Posterior cingulate gyrus (tissue), 11 donors: ENCODE measurements at regions of chr4 and their contacts with region 1.

Region 1: GRCh38 chr4:143411527-143412480 is 75.1 kb downstream of the GAB1 start:
- DNase-seq: peak in 4 of 10 donors; percentile 19 to 80 (median 33)

Region 2: DNA sequence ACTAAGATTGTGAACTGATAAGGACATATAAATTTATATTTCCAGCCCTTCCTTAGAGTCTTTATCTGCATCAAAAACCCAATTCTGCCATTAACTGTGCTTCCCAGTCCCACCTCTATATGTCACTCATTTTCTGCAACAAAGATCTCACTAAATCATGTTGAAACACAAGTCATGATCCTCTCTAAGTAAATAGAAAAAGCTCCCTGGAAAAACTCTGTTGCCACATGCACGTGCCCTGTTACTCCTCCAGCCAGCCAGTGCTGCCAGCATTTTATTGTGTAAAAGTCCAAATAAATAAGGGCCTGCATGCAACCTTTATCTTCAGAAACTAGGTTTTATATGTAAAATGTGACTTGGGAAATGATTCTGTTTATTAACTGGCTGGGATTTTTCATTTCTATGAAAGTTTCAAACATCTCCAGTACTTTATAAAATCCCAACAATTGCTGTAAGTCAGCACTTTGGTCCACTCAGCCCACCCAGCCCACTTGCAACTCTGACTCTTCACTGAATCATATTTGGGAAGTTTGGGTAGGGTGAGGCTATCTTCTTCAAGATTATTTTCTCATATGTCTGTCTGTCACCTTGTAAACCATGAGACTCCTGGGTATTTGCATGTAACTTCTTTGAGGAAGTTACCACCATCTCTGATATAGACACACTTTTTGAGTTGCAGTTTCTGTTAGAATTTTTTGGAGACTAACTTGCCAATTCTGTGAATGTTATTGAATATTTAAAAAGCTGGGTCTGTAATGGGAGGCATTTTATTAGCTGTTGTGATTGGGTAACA is 61.7 kb after region 1 on chr4:
- intact Hi-C with region 1: loop called (anchors 10 kb)
- DNase-seq: no peak